ENCODE measurements at regions of chrX and their contacts with region 1.

Region 1: GRCh38 chrX:75210602-75211001 is 54.5 kb upstream of the ABCB7 start:
- DNase-seq: no peak
- H3K4me3 ChIP-seq: no peak overlapping the region
- H3K27ac ChIP-seq: no peak overlapping the region
- H3K4me1 ChIP-seq: no peaks in the 10 kb centered on the region
- H3K27me3 ChIP-seq: peaks cover 0 to 18% of the 10 kb centered on the region in 2 donors
- CTCF ChIP-seq: no peak
- POLR2A ChIP-seq: no peak

Region 2: GRCh38 chrX:74023203-74023602 is 1187.4 kb before region 1 on chrX:
- intact Hi-C with region 1: no loop called
- DNase-seq: no peak
- H3K4me3 ChIP-seq: no peak overlapping the region
- H3K27ac ChIP-seq: no peak overlapping the region
- H3K4me1 ChIP-seq: no peaks in the 10 kb centered on the region
- H3K27me3 ChIP-seq: no peaks in the 10 kb centered on the region
- CTCF ChIP-seq: no peak
- POLR2A ChIP-seq: no peak

Region 3: DNA sequence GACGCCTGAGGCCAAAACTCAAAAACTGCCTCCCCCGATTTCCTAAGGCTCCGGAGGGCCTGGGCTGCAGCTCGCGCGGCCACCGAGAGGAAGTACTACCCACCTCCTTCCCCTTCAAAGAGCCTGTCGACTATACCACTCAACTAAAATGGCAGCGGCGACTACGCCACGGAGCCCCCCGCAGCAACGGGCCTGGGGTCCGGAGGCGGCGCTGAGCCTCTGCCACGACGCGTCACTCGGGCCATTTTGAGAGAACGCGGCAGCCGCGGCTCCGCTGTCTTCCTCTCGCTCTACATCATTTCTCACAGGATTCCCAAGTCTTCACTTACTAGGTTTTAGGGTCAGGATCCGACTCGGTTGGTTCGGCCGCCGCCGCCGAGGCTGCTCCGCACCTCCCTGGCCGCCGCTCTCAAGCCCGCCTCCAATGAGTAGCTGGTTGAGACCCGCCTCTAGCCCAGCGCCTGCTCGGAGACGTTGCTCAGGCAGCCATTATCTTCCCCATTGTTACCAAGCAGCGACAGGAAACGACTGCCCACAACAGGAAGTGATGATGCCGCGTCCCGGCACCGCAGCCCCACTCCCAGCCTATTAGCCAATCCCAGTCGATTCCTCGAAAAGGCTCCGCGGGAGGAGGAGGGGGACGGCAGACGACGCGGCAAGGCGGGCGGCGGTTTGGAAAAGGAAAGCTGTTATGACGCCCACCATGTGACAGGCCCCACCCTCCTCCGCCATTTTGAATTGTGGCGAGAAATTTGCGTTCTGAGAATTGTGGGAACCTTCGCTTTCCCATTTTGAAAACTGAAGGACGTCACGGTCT is 596.3 kb before region 1 on chrX and contains the start of gene RLIM:
- intact Hi-C with region 1: no loop called
- DNase-seq: peak; percentile 91 to 95
- H3K4me3 ChIP-seq: peak within 1 kb of the TSS; percentile 74 to 78 (median 77)
- H3K27ac ChIP-seq: peak within 1 kb of the TSS; percentile 98 to 99
- H3K4me1 ChIP-seq: no peaks in the 10 kb centered on the region
- H3K27me3 ChIP-seq: peaks cover 0 to 5% of the 10 kb centered on the region in 2 donors
- CTCF ChIP-seq: no peak
- POLR2A ChIP-seq: peak; percentile 63
- total RNA-seq, gene RLIM: 32.1 to 45.1 (median 33.8) TPM

Region 4: GRCh38 chrX:75596178-75596577 is 385.6 kb after region 1 on chrX:
- intact Hi-C with region 1: loop called (anchors 5 kb)
- DNase-seq: peak in 1 of 2 donors; percentile 18
- H3K4me3 ChIP-seq: no peak overlapping the region
- H3K27ac ChIP-seq: no peak overlapping the region
- H3K4me1 ChIP-seq: no peaks in the 10 kb centered on the region
- H3K27me3 ChIP-seq: no peaks in the 10 kb centered on the region
- CTCF ChIP-seq: no peak
- POLR2A ChIP-seq: no peak

Region 5: DNA sequence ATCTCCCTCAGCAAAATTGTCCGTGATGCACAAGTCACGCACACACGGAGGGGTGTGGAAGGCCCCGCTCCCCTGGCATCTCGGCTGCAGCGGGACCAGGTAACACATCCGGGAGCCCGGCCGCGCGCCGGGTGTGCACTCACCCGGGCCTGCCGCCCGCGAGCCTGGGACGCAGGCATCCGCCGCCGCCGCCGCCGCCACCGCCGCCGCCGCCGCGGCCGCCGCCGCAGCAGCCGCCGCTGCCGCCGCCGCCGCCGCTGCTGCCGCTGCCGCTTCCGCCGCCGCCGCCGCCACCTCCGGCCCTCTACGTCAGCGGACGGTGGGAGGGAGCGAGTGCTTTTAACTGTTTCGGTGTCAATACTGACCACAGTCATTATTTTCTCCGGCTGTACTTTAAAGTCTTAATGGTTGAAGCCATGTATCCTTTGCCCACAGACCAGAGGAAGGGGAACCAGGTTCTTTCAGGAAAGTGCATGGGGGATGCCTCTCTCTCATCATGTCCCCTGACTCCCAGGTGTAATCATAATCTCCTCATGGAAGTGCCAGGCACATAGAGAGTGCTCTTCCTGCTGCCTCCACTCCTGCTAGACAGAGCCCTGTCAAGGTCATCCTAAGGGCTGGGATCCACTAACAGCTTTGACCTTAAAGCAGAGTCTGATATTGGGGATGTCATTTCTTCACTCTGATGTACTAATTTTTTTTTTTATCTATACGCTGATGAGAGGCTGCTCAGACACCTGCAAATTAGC is 536.5 kb after region 1 on chrX:
- intact Hi-C with region 1: no loop called
- DNase-seq: peak in 1 of 2 donors; percentile 48
- H3K4me3 ChIP-seq: peak overlapping the region; percentile 48 to 65 (median 54)
- H3K27ac ChIP-seq: peak overlapping the region; percentile 50 to 77
- H3K4me1 ChIP-seq: no peaks in the 10 kb centered on the region
- H3K27me3 ChIP-seq: peaks cover 0 to 20% of the 10 kb centered on the region in 2 donors
- CTCF ChIP-seq: no peak
- POLR2A ChIP-seq: no peak